B cell (primary cell): ENCODE measurements at regions of chr2 and their contacts with region 1.

Region 1: DNA sequence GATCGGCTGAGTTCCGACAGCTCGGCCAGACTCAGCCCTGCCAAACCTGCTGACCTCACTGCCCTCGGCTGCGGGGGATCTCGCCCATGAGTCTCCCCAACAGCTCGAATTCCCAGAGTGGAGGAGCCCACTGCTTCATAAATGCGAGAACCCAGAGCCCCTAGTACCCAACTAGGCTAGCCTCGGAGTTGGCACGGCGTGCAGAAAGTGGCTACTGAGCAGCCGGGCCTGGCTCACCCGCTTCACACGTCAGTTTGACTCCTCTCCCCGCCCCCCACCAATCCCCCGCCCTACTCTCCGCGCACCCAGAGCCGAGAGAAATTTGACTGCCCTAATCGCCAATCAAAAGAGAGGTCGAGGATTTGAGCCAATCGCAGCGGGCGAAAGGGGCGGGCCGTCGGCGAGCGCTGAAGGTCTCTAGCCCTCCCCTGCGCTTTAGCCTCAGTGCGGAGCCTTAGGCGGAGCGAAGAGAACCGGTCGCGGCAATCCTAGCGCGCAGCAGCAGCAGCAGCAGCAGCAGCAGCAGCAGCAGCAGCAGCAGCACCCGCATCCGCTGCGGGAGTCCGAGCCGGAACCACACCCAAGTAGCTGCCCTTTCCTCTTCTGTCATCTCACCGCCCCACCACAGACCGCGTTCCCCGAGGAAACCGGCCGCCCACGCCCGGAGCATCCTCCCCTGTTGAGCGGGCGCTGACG is at the start of gene GLS:
- DNase-seq: peak; percentile 98
- ATAC-seq: peak; percentile 81
- H3K4me3 ChIP-seq: peak within 1 kb of the TSS; percentile 81 to 94 (median 83)
- H3K4me3 Mint-ChIP-seq: peak within 1 kb of the TSS; percentile 99
- H3K27ac ChIP-seq: peak within 1 kb of the TSS; percentile 84 to 87
- H3K27ac Mint-ChIP-seq: peak within 1 kb of the TSS; percentile 99
- H3K4me1 ChIP-seq: peaks cover 38 to 40% of the 10 kb centered on the region in 2 donors
- H3K4me1 Mint-ChIP-seq: peaks cover 43% of the 10 kb centered on the region
- H3K27me3 ChIP-seq: no peaks in the 10 kb centered on the region
- H3K27me3 Mint-ChIP-seq: no peaks in the 10 kb centered on the region
- CTCF ChIP-seq: no peak
- total RNA-seq, gene GLS: 194 and 195 TPM in 2 replicates

Region 2: GRCh38 chr2:189661148-189661956 is 1219.2 kb before region 1 on chr2 and contains the start of gene ASNSD1:
- CTCF ChIA-PET with region 1: interaction called, 3 read pairs
- POLR2A ChIA-PET with region 1: no interaction called
- intact Hi-C with region 1: loop called (anchors 5 kb)
- DNase-seq: peak; percentile 100
- ATAC-seq: peak; percentile 94
- H3K4me3 ChIP-seq: peak within 1 kb of the TSS; percentile 42 to 100 (median 91)
- H3K4me3 Mint-ChIP-seq: no peak within 1 kb of the TSS
- H3K27ac ChIP-seq: peak within 1 kb of the TSS; percentile 77 to 95
- H3K27ac Mint-ChIP-seq: no peak within 1 kb of the TSS
- H3K4me1 ChIP-seq: peaks cover 21 to 30% of the 10 kb centered on the region in 2 donors
- H3K4me1 Mint-ChIP-seq: peaks cover 32% of the 10 kb centered on the region
- H3K27me3 ChIP-seq: no peaks in the 10 kb centered on the region
- H3K27me3 Mint-ChIP-seq: no peaks in the 10 kb centered on the region
- CTCF ChIP-seq: peak; percentile 93
- total RNA-seq, gene ASNSD1: 25.3 and 29.8 TPM in 2 replicates

Region 3: DNA sequence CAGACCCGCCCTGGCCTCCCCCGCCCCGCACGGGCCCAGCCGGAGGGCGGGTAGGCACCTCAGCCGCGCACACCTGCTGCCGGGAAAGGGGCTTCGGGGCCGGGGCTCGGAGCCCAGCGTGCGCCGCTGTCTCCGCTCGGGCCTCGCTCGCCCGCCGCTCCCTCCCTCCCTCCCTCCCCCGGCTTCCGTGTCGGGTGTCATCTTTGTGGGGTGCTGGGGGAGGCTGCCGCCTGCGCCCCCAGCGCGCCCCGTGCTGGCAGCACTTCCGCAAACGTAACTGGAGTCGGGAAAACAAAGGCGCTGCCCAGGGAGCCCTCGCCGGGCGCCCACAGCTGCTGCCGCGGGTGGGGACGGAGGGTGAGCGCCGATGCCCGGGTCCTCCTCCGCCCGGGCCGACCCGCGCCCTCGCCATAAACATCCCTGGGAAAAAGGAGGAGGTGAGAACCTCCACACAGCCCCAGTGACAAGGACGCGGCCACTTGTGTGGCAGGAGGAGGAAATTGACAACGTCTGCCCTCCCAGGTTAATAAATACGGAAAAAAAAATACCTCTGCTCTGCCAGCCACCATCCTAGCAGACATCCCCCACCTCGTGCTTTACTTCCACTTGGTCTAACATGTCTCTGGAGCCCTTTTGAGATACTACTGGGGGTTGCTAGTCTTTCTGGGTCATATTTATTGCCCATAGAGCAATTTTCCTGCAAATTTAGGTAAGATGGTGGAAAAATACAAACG is 471.8 kb before region 1 on chr2:
- CTCF ChIA-PET with region 1: no interaction called
- POLR2A ChIA-PET with region 1: no interaction called
- intact Hi-C with region 1: loop called (anchors 2 kb)
- DNase-seq: peak; percentile 90
- ATAC-seq: peak; percentile 70
- H3K4me3 ChIP-seq: peak overlapping the region; percentile 56 to 87 (median 76)
- H3K4me3 Mint-ChIP-seq: peak overlapping the region; percentile 91
- H3K27ac ChIP-seq: peak overlapping the region; percentile 83 to 95
- H3K27ac Mint-ChIP-seq: peak overlapping the region; percentile 95
- H3K4me1 ChIP-seq: peaks cover 20 to 24% of the 10 kb centered on the region in 2 donors
- H3K4me1 Mint-ChIP-seq: peaks cover 42% of the 10 kb centered on the region
- H3K27me3 ChIP-seq: no peaks in the 10 kb centered on the region
- H3K27me3 Mint-ChIP-seq: no peaks in the 10 kb centered on the region
- CTCF ChIP-seq: no peak

Region 4: GRCh38 chr2:190849774-190850173 is 30.8 kb before region 1 on chr2:
- CTCF ChIA-PET with region 1: interaction called, 24 read pairs
- POLR2A ChIA-PET with region 1: no interaction called
- intact Hi-C with region 1: loop called (anchors 1 kb)
- DNase-seq: no peak
- ATAC-seq: no peak
- H3K4me3 ChIP-seq: no peak overlapping the region
- H3K4me3 Mint-ChIP-seq: no peak overlapping the region
- H3K27ac ChIP-seq: no peak overlapping the region
- H3K27ac Mint-ChIP-seq: no peak overlapping the region
- H3K4me1 ChIP-seq: peaks cover 7 to 9% of the 10 kb centered on the region in 2 donors
- H3K4me1 Mint-ChIP-seq: peaks cover 12% of the 10 kb centered on the region
- H3K27me3 ChIP-seq: no peaks in the 10 kb centered on the region
- H3K27me3 Mint-ChIP-seq: no peaks in the 10 kb centered on the region
- CTCF ChIP-seq: no peak

Region 5: GRCh38 chr2:191020221-191020741 is 139.8 kb after region 1 on chr2:
- CTCF ChIA-PET with region 1: no interaction called
- POLR2A ChIA-PET with region 1: interaction called, 4 read pairs
- intact Hi-C with region 1: loop called (anchors 1 kb)
- DNase-seq: peak; percentile 98
- ATAC-seq: peak; percentile 90
- H3K4me3 ChIP-seq: peak overlapping the region; percentile 76 to 94 (median 83)
- H3K4me3 Mint-ChIP-seq: no peak overlapping the region
- H3K27ac ChIP-seq: peak overlapping the region; percentile 84 to 91
- H3K27ac Mint-ChIP-seq: no peak overlapping the region
- H3K4me1 ChIP-seq: peaks cover 16 to 22% of the 10 kb centered on the region in 2 donors
- H3K4me1 Mint-ChIP-seq: peaks cover 9% of the 10 kb centered on the region
- H3K27me3 ChIP-seq: no peaks in the 10 kb centered on the region
- H3K27me3 Mint-ChIP-seq: no peaks in the 10 kb centered on the region
- CTCF ChIP-seq: peak; percentile 17

Region 6: GRCh38 chr2:191280304-191280703 is 399.8 kb after region 1 on chr2:
- CTCF ChIA-PET with region 1: no interaction called
- POLR2A ChIA-PET with region 1: no interaction called
- intact Hi-C with region 1: no loop called
- DNase-seq: no peak
- ATAC-seq: no peak
- H3K4me3 ChIP-seq: no peak overlapping the region
- H3K4me3 Mint-ChIP-seq: no peak overlapping the region
- H3K27ac ChIP-seq: no peak overlapping the region
- H3K27ac Mint-ChIP-seq: no peak overlapping the region
- H3K4me1 ChIP-seq: peaks cover 9 to 22% of the 10 kb centered on the region in 2 donors
- H3K4me1 Mint-ChIP-seq: peaks cover 35% of the 10 kb centered on the region
- H3K27me3 ChIP-seq: no peaks in the 10 kb centered on the region
- H3K27me3 Mint-ChIP-seq: no peaks in the 10 kb centered on the region
- CTCF ChIP-seq: no peak

Region 7: DNA sequence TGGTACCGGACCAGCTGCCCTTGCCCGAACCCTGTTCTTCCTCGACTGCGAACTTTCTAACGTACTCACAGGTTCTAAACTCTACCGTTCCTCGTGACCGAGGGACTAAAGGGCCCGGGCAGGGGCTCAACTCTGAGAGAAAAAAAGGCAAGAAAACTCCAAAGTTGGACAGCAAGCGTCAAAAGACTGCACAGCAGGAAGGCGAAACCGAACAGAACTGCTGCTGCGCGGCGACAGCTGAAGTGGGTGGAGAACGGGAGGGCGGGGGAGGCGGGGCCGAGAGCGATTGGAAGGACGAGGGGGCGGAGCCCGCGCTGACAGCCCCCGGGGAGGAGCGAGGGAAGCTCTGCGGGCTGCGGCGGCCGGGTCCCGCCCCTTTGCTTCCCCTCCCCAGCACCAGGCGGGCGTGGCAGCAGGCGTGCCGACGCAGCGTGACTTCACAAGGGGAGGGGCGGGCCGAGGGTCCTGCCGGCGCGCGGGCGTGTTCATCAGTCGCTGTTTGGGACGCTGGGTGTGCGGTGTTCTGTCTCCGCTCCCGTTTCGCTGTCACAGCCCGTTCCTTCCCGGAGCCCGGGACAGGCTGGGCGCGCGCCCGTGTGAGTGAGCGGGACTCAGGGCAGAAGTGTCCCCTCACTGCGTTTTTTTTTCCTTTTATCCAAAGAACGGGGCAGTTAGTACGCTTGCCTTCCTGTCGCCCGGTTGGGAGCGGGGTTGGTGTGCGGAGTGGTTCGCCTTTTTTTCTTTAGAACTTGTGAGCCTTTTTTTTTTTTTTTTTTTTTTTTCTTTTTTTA is 797.3 kb after region 1 on chr2 and contains the start of gene NABP1:
- CTCF ChIA-PET with region 1: no interaction called
- POLR2A ChIA-PET with region 1: interaction called, 3 read pairs
- intact Hi-C with region 1: loop called (anchors 2 kb)
- DNase-seq: peak; percentile 99
- ATAC-seq: peak; percentile 89
- H3K4me3 ChIP-seq: peak within 1 kb of the TSS; percentile 82 to 97 (median 86)
- H3K4me3 Mint-ChIP-seq: peak within 1 kb of the TSS; percentile 99
- H3K27ac ChIP-seq: peak within 1 kb of the TSS; percentile 91 to 95
- H3K27ac Mint-ChIP-seq: peak within 1 kb of the TSS; percentile 100
- H3K4me1 ChIP-seq: peaks cover 44 to 49% of the 10 kb centered on the region in 2 donors
- H3K4me1 Mint-ChIP-seq: peaks cover 51% of the 10 kb centered on the region
- H3K27me3 ChIP-seq: no peaks in the 10 kb centered on the region
- H3K27me3 Mint-ChIP-seq: no peaks in the 10 kb centered on the region
- CTCF ChIP-seq: no peak
- total RNA-seq, gene NABP1: 56.4 and 58.0 TPM in 2 replicates